Panc1 (cell line): ENCODE measurements at regions of chr1 and their contacts with region 1.

Region 1: DNA sequence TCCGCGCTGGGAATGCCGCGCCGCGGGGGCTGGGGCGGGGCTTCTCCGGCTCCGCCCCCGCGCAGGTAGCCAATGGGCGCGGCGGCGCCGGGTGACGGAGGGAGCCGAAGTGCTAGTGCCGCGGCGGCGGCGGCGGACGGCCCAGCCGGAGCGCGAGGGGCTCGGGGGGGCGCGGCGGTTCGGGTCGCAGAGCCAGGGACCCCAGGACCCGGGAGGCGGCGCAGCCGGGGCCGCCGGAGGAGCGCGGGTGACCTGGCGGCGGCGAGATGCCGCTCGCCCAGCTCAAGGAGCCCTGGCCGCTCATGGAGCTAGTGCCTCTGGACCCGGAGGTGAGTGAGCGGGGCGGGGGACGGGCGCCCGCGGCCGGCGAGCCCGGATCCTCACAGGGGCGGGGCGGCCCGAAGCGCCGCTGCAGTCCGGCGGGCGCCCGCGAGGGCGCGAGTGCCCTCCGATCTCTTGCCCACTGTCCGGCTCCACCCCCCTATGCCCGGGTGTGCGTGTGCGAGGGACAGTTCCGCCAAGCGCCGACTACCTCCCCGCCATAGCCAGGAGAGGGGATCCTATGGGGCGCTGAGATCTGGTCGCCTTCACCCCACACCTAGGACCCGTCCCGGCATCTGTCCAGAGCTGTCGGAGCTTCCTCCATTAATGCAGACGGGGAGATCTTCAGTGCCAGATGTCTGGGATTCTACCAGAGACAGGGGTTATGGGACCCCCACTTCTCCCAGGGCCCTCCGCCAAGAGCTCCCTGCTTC is at the start of gene RPS6KA1:
- DNase-seq: no peak
- ATAC-seq: peak; percentile 87
- H3K4me3 ChIP-seq: peak within 1 kb of the TSS; percentile 79 to 90
- H3K27ac ChIP-seq: peak within 1 kb of the TSS; percentile 92
- H3K4me1 ChIP-seq: peaks cover 24% of the 10 kb centered on the region
- H3K27me3 ChIP-seq: no peaks in the 10 kb centered on the region
- CTCF ChIP-seq: no peak
- total RNA-seq, gene RPS6KA1: 44.0 TPM

Region 2: GRCh38 chr1:26472901-26473845 is 56.7 kb before region 1 on chr1:
- CTCF ChIA-PET with region 1: no interaction called
- POLR2A ChIA-PET with region 1: no interaction called
- in situ Hi-C with region 1: no loop called
- intact Hi-C with region 1: loop called (anchors 10 kb)
- DNase-seq: peak; percentile 38
- ATAC-seq: peak; percentile 66
- H3K4me3 ChIP-seq: peak overlapping the region; percentile 81 to 83
- H3K27ac ChIP-seq: peak overlapping the region; percentile 86
- H3K4me1 ChIP-seq: peaks cover 21% of the 10 kb centered on the region
- H3K27me3 ChIP-seq: no peaks in the 10 kb centered on the region
- CTCF ChIP-seq: no peak